ENCODE measurements at regions of chr10 and their contacts with region 1.

Region 1: DNA sequence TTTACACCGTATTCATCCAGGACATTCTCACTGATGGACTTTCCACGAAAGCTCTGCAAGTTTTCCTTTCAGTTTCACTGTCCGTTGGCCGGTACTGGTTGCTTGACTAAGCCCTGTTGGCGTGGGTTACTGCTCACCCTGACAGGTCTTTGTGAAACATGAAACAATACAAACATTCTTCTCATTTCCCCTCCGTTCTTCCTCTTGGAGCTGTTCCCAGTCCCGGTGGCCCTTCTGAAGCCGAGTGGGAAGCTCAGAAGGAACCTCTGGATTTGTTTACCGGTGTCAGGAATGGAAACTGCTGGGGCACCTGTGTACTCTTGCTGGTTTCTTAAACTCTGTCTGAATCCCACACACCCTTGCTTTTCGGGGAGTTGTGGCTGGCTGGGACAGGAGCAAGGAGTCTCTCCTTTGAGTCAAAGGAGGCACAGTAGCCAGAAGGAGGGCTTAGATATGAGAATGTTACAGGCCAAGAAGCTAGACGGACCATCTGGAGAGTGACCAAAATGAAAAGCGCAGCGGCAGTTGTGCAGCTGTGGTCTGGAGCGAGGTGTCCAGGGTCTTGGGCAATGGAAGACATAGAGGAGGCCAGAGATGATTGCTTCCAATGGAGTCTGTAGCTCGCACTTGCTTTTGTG is 45.7 kb downstream of the LYZL2 start:
- DNase-seq: peak; percentile 22
- H3K4me3 ChIP-seq: peak overlapping the region; percentile 4
- H3K27ac ChIP-seq: no peak overlapping the region
- H3K4me1 ChIP-seq: no peaks in the 10 kb centered on the region
- H3K27me3 ChIP-seq: no peaks in the 10 kb centered on the region
- CTCF ChIP-seq: no peak

Region 2: GRCh38 chr10:29535778-29536453 is 1048.0 kb before region 1 on chr10:
- CTCF ChIA-PET with region 1: interaction called, 16 read pairs
- POLR2A ChIA-PET with region 1: no interaction called
- intact Hi-C with region 1: no loop called
- DNase-seq: no peak
- H3K4me3 ChIP-seq: no peak overlapping the region
- H3K27ac ChIP-seq: no peak overlapping the region
- H3K4me1 ChIP-seq: no peaks in the 10 kb centered on the region
- H3K27me3 ChIP-seq: no peaks in the 10 kb centered on the region
- CTCF ChIP-seq: 0 out of 2 replicates have a peak, but pooled peaks have one; percentile 3

Region 3: GRCh38 chr10:30413996-30414576 is 169.8 kb before region 1 on chr10:
- CTCF ChIA-PET with region 1: no interaction called
- POLR2A ChIA-PET with region 1: no interaction called
- intact Hi-C with region 1: loop called (anchors 5 kb)
- DNase-seq: peak; percentile 80
- H3K4me3 ChIP-seq: no peak overlapping the region
- H3K27ac ChIP-seq: no peak overlapping the region
- H3K4me1 ChIP-seq: no peaks in the 10 kb centered on the region
- H3K27me3 ChIP-seq: no peaks in the 10 kb centered on the region
- CTCF ChIP-seq: peak; percentile 77

Measured in A673 (cell line).